Left ventricle myocardium inferior (tissue), 1 donor: ENCODE measurements at regions of chr10 and their contacts with region 1.

Region 1: DNA sequence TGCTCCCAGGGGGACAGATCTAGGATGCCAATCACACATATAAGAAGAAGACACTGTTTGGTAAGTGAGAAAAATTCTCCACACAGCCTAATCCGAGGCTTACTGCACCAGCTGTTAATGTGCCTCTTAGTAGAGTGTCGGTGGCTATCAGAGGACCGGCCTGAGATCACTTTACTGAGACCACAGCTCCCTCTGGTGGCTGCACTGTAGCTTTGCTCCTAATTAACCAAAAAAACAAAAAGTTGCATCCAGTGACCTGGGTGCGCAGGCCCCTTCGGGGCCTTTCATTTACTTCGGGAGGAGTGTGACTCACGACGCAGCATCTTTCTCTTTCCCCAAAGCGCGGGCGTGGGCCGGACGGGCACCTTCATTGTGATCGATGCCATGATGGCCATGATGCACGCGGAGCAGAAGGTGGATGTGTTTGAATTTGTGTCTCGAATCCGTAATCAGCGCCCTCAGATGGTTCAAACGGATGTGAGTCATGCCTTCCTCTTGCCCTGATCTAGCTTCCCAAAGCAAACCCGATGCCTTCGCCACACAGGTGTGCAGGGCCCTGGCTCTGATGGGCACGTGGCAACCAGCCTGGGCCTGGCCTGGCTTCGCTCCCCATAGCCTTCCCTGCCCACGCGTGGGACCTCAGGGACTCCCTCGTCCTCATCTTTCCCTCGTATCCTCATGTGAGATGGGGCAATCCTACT is 56.7 kb downstream of the MKI67 start:
- DNase-seq: peak; percentile 67
- H3K4me3 ChIP-seq: no peak overlapping the region
- H3K27ac ChIP-seq: no peak overlapping the region
- H3K4me1 ChIP-seq: peaks cover 18% of the 10 kb centered on the region
- H3K27me3 ChIP-seq: no peaks in the 10 kb centered on the region
- CTCF ChIP-seq: peak; percentile 86

Region 2: DNA sequence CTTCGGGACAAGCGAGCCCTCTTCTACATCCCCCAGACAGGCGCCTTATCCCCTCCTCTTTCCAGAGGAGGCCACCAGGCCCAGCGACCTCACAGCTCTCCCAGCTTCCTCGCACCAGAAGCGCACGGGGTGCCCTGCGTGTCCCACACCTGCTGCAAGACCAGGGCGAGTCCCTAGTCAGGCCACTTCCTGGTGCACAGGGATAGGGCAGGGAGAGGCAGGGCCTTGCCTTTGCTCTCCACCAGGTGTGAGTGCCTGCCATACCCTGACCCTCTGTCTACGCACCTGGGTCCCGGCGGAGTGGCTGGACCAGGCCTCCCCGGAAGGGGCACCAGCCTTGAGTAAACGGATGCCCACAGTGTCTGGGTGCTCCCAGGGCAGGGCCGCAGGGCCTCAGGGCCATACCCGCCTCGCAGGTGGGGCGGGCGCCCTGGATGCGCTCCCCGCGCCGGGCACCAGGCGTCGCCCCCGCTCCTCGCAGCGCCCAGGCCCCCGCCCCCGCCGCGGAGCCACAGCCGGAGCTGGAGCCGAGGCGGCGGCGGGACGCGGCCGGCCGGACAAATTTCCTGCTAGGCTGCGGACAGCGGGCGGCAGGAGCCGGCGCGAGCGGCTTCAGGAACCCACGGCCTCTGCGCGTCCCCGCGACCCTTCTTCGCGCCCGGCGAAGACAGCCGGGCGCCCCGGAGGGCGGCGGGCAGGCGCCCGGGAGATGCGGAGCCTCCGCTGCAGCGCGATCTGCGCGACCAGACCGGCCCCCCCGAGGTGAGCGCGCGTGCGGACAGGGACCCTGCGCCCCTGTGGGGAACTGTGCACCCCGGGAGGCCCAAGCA is 162.7 kb before region 1 on chr10 and contains the start of gene PTPRE:
- intact Hi-C with region 1: loop called (anchors 10 kb)
- DNase-seq: peak; percentile 82
- H3K4me3 ChIP-seq: peak within 1 kb of the TSS; percentile 90
- H3K27ac ChIP-seq: peak within 1 kb of the TSS; percentile 96
- H3K4me1 ChIP-seq: peaks cover 52% of the 10 kb centered on the region
- H3K27me3 ChIP-seq: no peaks in the 10 kb centered on the region
- CTCF ChIP-seq: peak; percentile 93
- total RNA-seq, gene PTPRE: 13.8 TPM

Region 3: GRCh38 chr10:128011175-128011979 is 58.1 kb before region 1 on chr10:
- intact Hi-C with region 1: loop called (anchors 10 kb)
- DNase-seq: peak; percentile 78
- H3K4me3 ChIP-seq: peak overlapping the region; percentile 20
- H3K27ac ChIP-seq: no peak overlapping the region
- H3K4me1 ChIP-seq: peaks cover 37% of the 10 kb centered on the region
- H3K27me3 ChIP-seq: no peaks in the 10 kb centered on the region
- CTCF ChIP-seq: peak; percentile 100

Region 4: GRCh38 chr10:128211953-128212727 is 142.6 kb after region 1 on chr10:
- intact Hi-C with region 1: no loop called
- DNase-seq: peak; percentile 82
- H3K4me3 ChIP-seq: peak overlapping the region; percentile 50
- H3K27ac ChIP-seq: no peak overlapping the region
- H3K4me1 ChIP-seq: peaks cover 14% of the 10 kb centered on the region
- H3K27me3 ChIP-seq: peaks cover 19% of the 10 kb centered on the region
- CTCF ChIP-seq: peak; percentile 97